ENCODE measurements at regions of chr19 and their contacts with region 1.

Region 1: DNA sequence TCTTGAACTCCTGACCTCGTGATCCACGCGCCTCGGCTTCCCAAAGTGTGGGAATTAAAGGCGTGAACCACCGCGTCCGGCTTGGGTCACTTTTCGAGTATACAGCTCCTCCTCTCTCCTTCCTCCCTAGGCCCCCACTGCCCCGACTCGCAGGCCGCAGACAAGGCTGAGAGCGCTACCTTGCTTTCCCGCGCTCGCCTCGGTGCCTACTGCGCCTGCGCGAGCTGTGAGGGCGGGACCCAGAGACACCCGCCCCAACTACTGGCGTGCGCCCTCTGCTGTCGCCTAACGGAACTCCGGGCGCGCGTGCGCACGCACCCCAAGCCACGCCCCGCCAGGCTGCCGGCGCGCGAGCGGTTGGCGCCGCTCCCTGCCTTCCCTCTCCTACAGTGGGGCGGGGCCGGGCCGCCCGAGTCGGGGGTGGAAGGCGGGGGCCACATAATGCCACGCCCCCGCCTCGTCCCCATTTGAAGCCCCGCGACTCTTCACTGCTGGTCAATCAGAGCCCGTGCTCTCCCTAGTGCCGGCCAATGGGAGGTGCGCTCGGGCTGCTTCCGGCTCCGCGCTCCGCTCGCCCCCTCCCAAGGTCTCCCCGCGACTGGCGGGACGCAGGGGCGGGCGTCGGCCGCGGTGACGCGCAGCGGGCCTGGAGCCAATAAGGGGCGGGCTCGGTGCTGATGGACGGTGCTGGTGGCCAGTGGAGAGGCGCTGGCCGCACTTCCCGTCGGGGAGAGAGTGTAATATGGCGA is at the start of gene RAB8A:
- DNase-seq: peak; percentile 96
- ATAC-seq: peak; percentile 93
- H3K4me3 ChIP-seq: peak within 1 kb of the TSS; percentile 100
- H3K27ac ChIP-seq: peak within 1 kb of the TSS; percentile 94
- H3K4me1 ChIP-seq: peaks cover 30% of the 10 kb centered on the region
- H3K27me3 ChIP-seq: no peaks in the 10 kb centered on the region
- CTCF ChIP-seq: peak; percentile 87 to 95 (median 93)
- EP300 ChIP-seq: no peak
- POLR2A ChIP-seq: no peak
- RAD21 ChIP-seq: peak; percentile 56
- polyA plus RNA-seq, gene RAB8A: 23.9 to 39.1 TPM

Region 2: GRCh38 chr19:15810335-15810734 is 301.0 kb before region 1 on chr19:
- CTCF ChIA-PET with region 1: no interaction called
- POLR2A ChIA-PET with region 1: no interaction called
- RAD21 ChIA-PET with region 1: no interaction called
- SMC1A ChIA-PET with region 1: no interaction called
- in situ Hi-C with region 1: no loop called
- intact Hi-C with region 1: no loop called
- DNase-seq: no peak
- ATAC-seq: no peak
- H3K4me3 ChIP-seq: no peak overlapping the region
- H3K27ac ChIP-seq: no peak overlapping the region
- H3K4me1 ChIP-seq: no peaks in the 10 kb centered on the region
- H3K27me3 ChIP-seq: no peaks in the 10 kb centered on the region; a peak in 1 of 4 replicates
- CTCF ChIP-seq: 0 out of 6 replicates have a peak, but pooled peaks of 1 of the 3 experiments have one; percentile 0
- EP300 ChIP-seq: no peak
- POLR2A ChIP-seq: no peak
- RAD21 ChIP-seq: 0 out of 2 replicates have a peak, but pooled peaks have one; percentile 10

Region 3: DNA sequence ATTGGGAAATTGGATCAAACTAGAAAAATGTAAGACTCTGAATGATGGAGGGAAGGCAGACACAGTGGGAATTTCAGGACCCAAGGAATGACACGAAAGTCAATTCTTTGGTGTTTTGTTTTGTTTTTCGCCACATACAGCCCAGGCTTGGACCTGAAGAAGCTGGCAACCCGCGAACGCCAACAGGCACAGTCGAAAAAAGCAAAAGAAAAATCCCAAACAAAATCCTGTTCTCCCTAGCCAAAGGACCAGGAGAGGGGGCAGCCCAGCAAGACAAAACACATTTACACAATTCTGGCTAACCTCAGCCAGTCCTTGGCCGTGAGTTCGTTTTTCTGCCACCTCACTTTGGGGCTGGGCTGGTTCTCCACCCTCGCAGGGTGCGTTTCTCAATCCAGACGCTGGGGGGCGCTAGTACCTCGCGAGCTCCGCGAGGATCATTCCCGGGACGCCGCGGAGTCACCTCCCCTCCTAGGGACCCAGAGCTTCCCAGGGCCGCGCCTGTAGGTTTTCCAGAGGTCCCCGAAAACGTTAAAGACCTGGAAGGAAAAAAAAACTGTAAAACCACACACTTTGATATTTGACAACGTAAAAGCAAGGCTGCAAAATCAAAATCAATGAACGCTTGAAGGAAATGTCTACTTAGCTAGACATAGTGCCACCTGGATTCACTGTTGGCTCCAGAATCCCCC is 69.9 kb before region 1 on chr19:
- CTCF ChIA-PET with region 1: interaction called, 26 read pairs
- POLR2A ChIA-PET with region 1: no interaction called
- RAD21 ChIA-PET with region 1: interaction called, 14 read pairs
- SMC1A ChIA-PET with region 1: interaction called, 16 read pairs
- in situ Hi-C with region 1: no loop called
- intact Hi-C with region 1: no loop called
- DNase-seq: no peak
- ATAC-seq: peak; percentile 91
- H3K4me3 ChIP-seq: no peak overlapping the region
- H3K27ac ChIP-seq: no peak overlapping the region
- H3K4me1 ChIP-seq: no peaks in the 10 kb centered on the region
- H3K27me3 ChIP-seq: no peaks in the 10 kb centered on the region
- CTCF ChIP-seq: peak; percentile 92 to 93 (median 92)
- EP300 ChIP-seq: no peak
- POLR2A ChIP-seq: no peak
- RAD21 ChIP-seq: peak; percentile 88

Region 4: GRCh38 chr19:16070366-16070990 is 40.9 kb before region 1 on chr19:
- CTCF ChIA-PET with region 1: interaction called, 26 read pairs
- POLR2A ChIA-PET with region 1: interaction called, 10 read pairs
- RAD21 ChIA-PET with region 1: interaction called, 6 read pairs
- SMC1A ChIA-PET with region 1: interaction called, 4 read pairs
- in situ Hi-C with region 1: no loop called
- intact Hi-C with region 1: no loop called
- DNase-seq: no peak
- ATAC-seq: peak; percentile 87
- H3K4me3 ChIP-seq: no peak overlapping the region
- H3K27ac ChIP-seq: peak overlapping the region; percentile 68
- H3K4me1 ChIP-seq: peaks cover 24% of the 10 kb centered on the region
- H3K27me3 ChIP-seq: no peaks in the 10 kb centered on the region
- CTCF ChIP-seq: peak in 1 of 3 experiments; percentile 4; a peak in 1 of 6 replicates
- EP300 ChIP-seq: no peak
- POLR2A ChIP-seq: peak; percentile 83
- RAD21 ChIP-seq: no peak

Region 5: GRCh38 chr19:16085115-16085514 is 26.2 kb before region 1 on chr19:
- CTCF ChIA-PET with region 1: interaction called, 24 read pairs
- POLR2A ChIA-PET with region 1: interaction called, 6 read pairs
- RAD21 ChIA-PET with region 1: interaction called, 3 read pairs
- SMC1A ChIA-PET with region 1: interaction called, 7 read pairs
- in situ Hi-C with region 1: no loop called
- intact Hi-C with region 1: loop called (anchors 2 kb)
- DNase-seq: no peak
- ATAC-seq: no peak
- H3K4me3 ChIP-seq: no peak overlapping the region
- H3K27ac ChIP-seq: no peak overlapping the region
- H3K4me1 ChIP-seq: peaks cover 60% of the 10 kb centered on the region
- H3K27me3 ChIP-seq: no peaks in the 10 kb centered on the region
- CTCF ChIP-seq: no peak
- EP300 ChIP-seq: no peak
- POLR2A ChIP-seq: 0 out of 2 replicates have a peak, but pooled peaks have one; percentile 38
- RAD21 ChIP-seq: no peak

Region 6: DNA sequence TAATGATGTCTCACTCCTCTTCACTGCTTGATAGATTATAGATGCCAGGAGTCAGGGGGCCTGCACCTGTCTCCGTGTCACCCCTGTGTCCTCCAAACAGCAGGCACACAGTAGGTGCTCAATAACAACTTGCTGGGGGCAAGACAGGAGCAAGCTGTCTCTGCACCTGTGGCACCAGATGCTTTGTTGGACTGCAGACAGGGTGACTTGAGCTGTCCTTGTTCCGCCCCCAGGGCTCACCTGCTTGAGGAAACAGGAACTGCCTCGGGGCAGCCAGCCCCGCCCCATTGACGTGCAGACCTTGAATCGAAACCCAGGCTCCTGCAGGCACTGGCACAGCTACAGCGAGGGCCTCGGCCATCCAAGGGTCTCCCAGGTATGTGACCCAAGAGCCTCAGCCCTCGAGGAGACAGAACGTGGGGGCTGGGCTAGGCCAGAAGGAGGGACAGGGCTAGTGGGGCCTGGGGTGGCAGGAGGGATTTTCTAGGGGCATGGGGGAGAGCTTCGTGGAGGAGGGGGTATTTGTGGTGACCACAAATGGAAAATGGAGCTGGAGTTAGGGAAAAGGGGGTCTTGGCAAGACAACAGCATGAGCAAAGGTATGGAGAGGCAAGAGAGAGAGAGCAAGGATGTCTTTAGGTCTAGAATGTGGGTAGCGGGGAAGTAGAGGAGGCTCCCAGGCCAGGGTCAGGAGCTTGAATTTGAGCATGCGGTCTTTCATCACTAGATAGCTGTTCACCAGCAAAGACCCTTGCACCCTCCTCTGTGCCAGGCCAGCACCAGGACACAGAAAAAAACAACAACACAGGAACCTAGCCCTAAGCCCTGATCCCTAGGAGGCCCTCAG is 32.3 kb after region 1 on chr19 and contains the start of gene HSH2D:
- CTCF ChIA-PET with region 1: interaction called, 111 read pairs
- POLR2A ChIA-PET with region 1: interaction called, 174 read pairs
- RAD21 ChIA-PET with region 1: interaction called, 80 read pairs
- SMC1A ChIA-PET with region 1: interaction called, 135 read pairs
- in situ Hi-C with region 1: no loop called
- intact Hi-C with region 1: no loop called
- DNase-seq: peak; percentile 90
- ATAC-seq: peak; percentile 70
- H3K4me3 ChIP-seq: peak within 1 kb of the TSS; percentile 92
- H3K27ac ChIP-seq: peak within 1 kb of the TSS; percentile 99
- H3K4me1 ChIP-seq: peaks cover 37% of the 10 kb centered on the region
- H3K27me3 ChIP-seq: no peaks in the 10 kb centered on the region
- CTCF ChIP-seq: no peak
- EP300 ChIP-seq: peak in 1 of 2 experiments; percentile 81; a peak in 1 of 4 replicates
- POLR2A ChIP-seq: peak; percentile 97
- RAD21 ChIP-seq: no peak
- polyA plus RNA-seq, gene HSH2D: 22.0 to 27.2 TPM

Region 7: GRCh38 chr19:16446724-16447368 is 335.5 kb after region 1 on chr19:
- CTCF ChIA-PET with region 1: no interaction called
- POLR2A ChIA-PET with region 1: no interaction called
- RAD21 ChIA-PET with region 1: no interaction called
- SMC1A ChIA-PET with region 1: no interaction called
- in situ Hi-C with region 1: no loop called
- intact Hi-C with region 1: loop called (anchors 10 kb)
- DNase-seq: peak; percentile 70
- ATAC-seq: peak; percentile 71
- H3K4me3 ChIP-seq: peak overlapping the region; percentile 12; the same call in 1 of the 2 replicates
- H3K27ac ChIP-seq: peak overlapping the region; percentile 99
- H3K4me1 ChIP-seq: peaks cover 86% of the 10 kb centered on the region
- H3K27me3 ChIP-seq: no peaks in the 10 kb centered on the region
- CTCF ChIP-seq: no peak
- EP300 ChIP-seq: peak in 1 of 2 experiments; percentile 83; a peak in 2 of 4 replicates
- POLR2A ChIP-seq: peak; percentile 53
- RAD21 ChIP-seq: no peak

Measured in GM12878 (cell line).